ENCODE measurements at regions of chr2 and their contacts with region 1.

Region 1: GRCh38 chr2:119659601-119660342 is 19.2 kb upstream of the TMEM177 start:
- DNase-seq: peak; percentile 58
- ATAC-seq: peak; percentile 49
- H3K4me3 ChIP-seq: no peak overlapping the region
- H3K4me3 Mint-ChIP-seq: no peak overlapping the region
- H3K27ac ChIP-seq: no peak overlapping the region
- H3K27ac Mint-ChIP-seq: no peak overlapping the region
- H3K4me1 ChIP-seq: no peaks in the 10 kb centered on the region
- H3K4me1 Mint-ChIP-seq: no peaks in the 10 kb centered on the region
- H3K27me3 ChIP-seq: peaks cover 0 to 12% (median 3%) of the 10 kb centered on the region in 4 experiments
- H3K27me3 Mint-ChIP-seq: peaks cover 37% of the 10 kb centered on the region
- CTCF ChIP-seq: peak; percentile 92

Region 2: GRCh38 chr2:119407430-119408220 is 252.1 kb before region 1 on chr2:
- CTCF ChIA-PET with region 1: interaction called, 3 read pairs
- POLR2A ChIA-PET with region 1: no interaction called
- intact Hi-C with region 1: loop called (anchors 1 kb)
- DNase-seq: peak; percentile 67
- ATAC-seq: peak; percentile 60
- H3K4me3 ChIP-seq: no peak overlapping the region
- H3K4me3 Mint-ChIP-seq: no peak overlapping the region
- H3K27ac ChIP-seq: no peak overlapping the region
- H3K27ac Mint-ChIP-seq: no peak overlapping the region
- H3K4me1 ChIP-seq: no peaks in the 10 kb centered on the region
- H3K4me1 Mint-ChIP-seq: no peaks in the 10 kb centered on the region
- H3K27me3 ChIP-seq: peaks cover 0 to 3% (median 0%) of the 10 kb centered on the region in 4 experiments
- H3K27me3 Mint-ChIP-seq: peaks cover 15% of the 10 kb centered on the region
- CTCF ChIP-seq: peak; percentile 81

Region 3: GRCh38 chr2:119641562-119642258 is 18.1 kb before region 1 on chr2:
- CTCF ChIA-PET with region 1: interaction called, 177 read pairs
- POLR2A ChIA-PET with region 1: no interaction called
- intact Hi-C with region 1: loop called (anchors 1 kb)
- DNase-seq: peak; percentile 77
- ATAC-seq: peak; percentile 86
- H3K4me3 ChIP-seq: no peak overlapping the region
- H3K4me3 Mint-ChIP-seq: no peak overlapping the region
- H3K27ac ChIP-seq: no peak overlapping the region
- H3K27ac Mint-ChIP-seq: no peak overlapping the region
- H3K4me1 ChIP-seq: peaks cover 0 to 5% of the 10 kb centered on the region in 2 donors
- H3K4me1 Mint-ChIP-seq: peaks cover 6% of the 10 kb centered on the region
- H3K27me3 ChIP-seq: no peaks in the 10 kb centered on the region
- H3K27me3 Mint-ChIP-seq: peaks cover 25% of the 10 kb centered on the region
- CTCF ChIP-seq: peak; percentile 98